Right cardiac atrium (tissue), 5 donors: ENCODE measurements at regions of chr22 and their contacts with region 1.

Region 1: GRCh38 chr22:24325105-24325757 is 54.6 kb downstream of the SPECC1L start:
- DNase-seq: no peak
- ATAC-seq: peak; percentile 81 to 84
- H3K4me3 ChIP-seq: no peak overlapping the region
- H3K27ac ChIP-seq: no peak overlapping the region
- H3K4me1 ChIP-seq: peaks cover 2% of the 10 kb centered on the region
- H3K27me3 ChIP-seq: no peaks in the 10 kb centered on the region

Region 2: DNA sequence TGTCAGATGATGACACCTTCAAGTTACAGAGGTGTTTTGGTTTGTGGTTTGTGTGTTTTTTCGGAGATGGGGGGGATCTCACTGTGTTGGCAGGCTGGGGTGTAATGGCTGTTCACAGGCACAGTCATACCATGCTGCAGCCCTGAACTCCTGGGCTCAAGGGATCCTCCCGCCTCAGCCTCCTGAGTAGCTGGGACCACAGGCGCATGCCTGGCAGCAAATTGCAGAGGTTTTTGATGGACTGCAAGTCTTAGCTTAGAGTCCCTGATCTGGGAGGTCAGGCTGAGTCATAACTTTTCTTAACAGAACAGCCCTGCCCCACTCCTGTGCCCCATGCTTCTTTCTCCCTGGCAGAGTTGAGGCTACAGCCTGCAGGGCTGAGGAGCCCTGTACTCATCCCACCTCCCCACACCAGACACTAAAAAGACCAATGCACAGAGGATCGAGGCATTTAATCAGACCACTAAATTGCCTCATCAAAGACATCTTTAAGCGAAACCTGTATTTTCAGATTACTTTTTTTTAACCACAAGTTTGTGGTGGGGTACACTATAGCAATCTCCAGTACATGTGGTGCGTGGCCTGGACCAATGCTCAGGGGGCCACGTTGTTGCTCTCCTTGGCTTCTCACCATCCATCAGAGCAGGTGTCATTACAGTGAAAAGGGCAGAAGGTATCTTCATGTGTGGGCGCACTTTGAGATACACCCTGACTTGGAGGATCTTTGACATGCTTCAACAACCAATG is 85.1 kb after region 1 on chr22:
- intact Hi-C with region 1: loop called in 1 of 4 experiments (anchors 10 kb)
- DNase-seq: no peak
- ATAC-seq: no peak
- H3K4me3 ChIP-seq: no peak overlapping the region
- H3K27ac ChIP-seq: no peak overlapping the region
- H3K4me1 ChIP-seq: peaks cover 20% of the 10 kb centered on the region
- H3K27me3 ChIP-seq: no peaks in the 10 kb centered on the region

Region 3: GRCh38 chr22:24525416-24526037 is 200.3 kb after region 1 on chr22:
- intact Hi-C with region 1: loop called in 3 of 4 experiments (anchors 5 to 10 kb)
- DNase-seq: peak; percentile 78 to 93 (median 87)
- ATAC-seq: peak; percentile 68 to 83
- H3K4me3 ChIP-seq: no peak overlapping the region
- H3K27ac ChIP-seq: no peak overlapping the region
- H3K4me1 ChIP-seq: peaks cover 5% of the 10 kb centered on the region
- H3K27me3 ChIP-seq: no peaks in the 10 kb centered on the region